ENCODE measurements at regions of chr4 and their contacts with region 1.

Region 1: DNA sequence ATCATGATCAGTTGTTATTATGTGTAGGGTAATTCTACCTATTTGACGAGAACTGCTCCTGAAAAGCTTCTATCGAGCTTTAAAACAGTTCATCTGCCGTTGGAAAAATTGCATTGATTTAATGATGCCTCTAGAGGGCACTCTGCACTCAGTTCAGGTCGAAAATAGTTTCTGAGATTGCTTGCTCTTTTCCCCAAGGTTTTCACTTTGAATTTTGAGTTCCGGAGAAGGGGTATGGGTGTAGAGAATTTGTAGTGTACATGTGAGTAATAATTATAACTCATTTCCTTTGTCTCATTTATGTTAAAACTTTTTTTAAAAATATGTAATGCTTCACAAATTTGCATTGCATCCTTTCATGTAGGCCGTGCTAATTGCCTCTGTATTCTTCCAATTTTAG is 28.4 kb upstream of the TNIP3 start:
- DNase-seq: no peak
- H3K4me3 ChIP-seq: no peak overlapping the region
- H3K27ac ChIP-seq: no peak overlapping the region
- H3K4me1 ChIP-seq: peaks cover 0 to 5% (median 0%) of the 10 kb centered on the region in 4 experiments; a peak in 2 of 7 replicates
- H3K27me3 ChIP-seq: no peaks in the 10 kb centered on the region
- CTCF ChIP-seq: peak in 2 of 3 experiments; percentile 70 to 82; a peak in 3 of 4 replicates
- EP300 ChIP-seq: no peak
- POLR2A ChIP-seq: no peak
- RAD21 ChIP-seq: peak; percentile 87 to 90

Region 2: GRCh38 chr4:121168446-121169281 is 23.8 kb before region 1 on chr4:
- CTCF ChIA-PET with region 1: interaction called, 13 read pairs
- POLR2A ChIA-PET with region 1: no interaction called
- DNase-seq: no peak
- H3K4me3 ChIP-seq: no peak overlapping the region
- H3K27ac ChIP-seq: no peak overlapping the region
- H3K4me1 ChIP-seq: no peaks in the 10 kb centered on the region
- H3K27me3 ChIP-seq: no peaks in the 10 kb centered on the region
- CTCF ChIP-seq: no peak
- EP300 ChIP-seq: no peak
- POLR2A ChIP-seq: no peak
- RAD21 ChIP-seq: no peak

Region 3: DNA sequence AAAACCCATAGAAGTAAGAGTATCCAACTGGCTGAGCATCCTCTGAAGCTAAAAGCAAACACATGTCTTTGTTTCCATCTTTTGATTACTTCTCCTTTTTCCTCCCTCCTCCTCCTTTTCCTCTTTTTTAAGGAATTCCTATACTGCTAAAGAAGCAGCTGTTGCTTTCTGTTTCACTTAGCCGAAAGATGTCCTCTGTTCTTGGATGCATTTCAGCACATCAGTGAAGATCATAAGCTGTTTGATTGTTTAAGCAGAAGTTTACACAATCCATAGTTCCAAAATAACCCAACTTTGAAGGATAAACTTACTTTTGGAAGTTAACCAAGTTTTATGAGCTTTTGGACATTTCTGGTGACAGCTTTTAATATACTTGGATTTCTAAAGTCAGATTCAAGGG is 26.7 kb after region 1 on chr4:
- CTCF ChIA-PET with region 1: interaction called, 12 read pairs
- POLR2A ChIA-PET with region 1: no interaction called
- DNase-seq: no peak
- H3K4me3 ChIP-seq: no peak overlapping the region
- H3K27ac ChIP-seq: no peak overlapping the region
- H3K4me1 ChIP-seq: no peaks in the 10 kb centered on the region
- H3K27me3 ChIP-seq: peaks cover 0 to 1% (median 0%) of the 10 kb centered on the region in 4 experiments; a peak in 1 of 7 replicates
- CTCF ChIP-seq: no peak
- EP300 ChIP-seq: no peak
- POLR2A ChIP-seq: no peak
- RAD21 ChIP-seq: no peak

Region 4: DNA sequence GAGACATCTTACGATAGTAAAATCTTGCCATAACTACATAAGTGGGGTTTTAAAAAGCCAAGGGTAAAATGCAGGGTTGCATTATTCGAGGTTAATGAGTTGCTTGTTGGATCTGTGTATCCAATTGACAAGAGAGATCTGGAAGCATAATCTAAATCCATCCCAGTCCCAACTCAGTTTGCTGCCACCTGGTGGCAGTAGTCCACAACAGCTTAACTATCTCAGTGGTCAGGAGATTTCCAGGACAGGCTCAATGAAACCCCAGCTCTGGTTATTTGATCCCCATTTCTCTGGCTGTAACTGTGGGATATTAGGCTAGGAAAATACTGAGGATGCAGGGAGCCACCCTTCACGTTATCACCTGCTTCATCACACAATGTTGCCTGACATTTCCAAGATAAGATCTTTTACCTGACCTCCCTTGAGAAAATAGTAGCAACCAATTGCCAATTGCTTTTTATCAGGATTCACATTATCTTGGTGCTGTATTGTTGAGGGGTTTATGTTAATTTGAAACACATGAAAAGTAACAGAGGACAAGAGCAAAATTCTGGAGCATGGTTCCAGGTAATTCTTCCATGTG is 59.8 kb after region 1 on chr4:
- CTCF ChIA-PET with region 1: interaction called, 65 read pairs
- POLR2A ChIA-PET with region 1: no interaction called
- DNase-seq: peak; percentile 25 to 63
- H3K4me3 ChIP-seq: no peak overlapping the region
- H3K27ac ChIP-seq: no peak overlapping the region
- H3K4me1 ChIP-seq: no peaks in the 10 kb centered on the region; a peak in 1 of 7 replicates
- H3K27me3 ChIP-seq: peaks cover 0 to 1% (median 0%) of the 10 kb centered on the region in 4 experiments; a peak in 1 of 7 replicates
- CTCF ChIP-seq: peak; percentile 52 to 88 (median 79)
- EP300 ChIP-seq: no peak
- POLR2A ChIP-seq: no peak
- RAD21 ChIP-seq: peak; percentile 64 to 79

Region 5: GRCh38 chr4:121554382-121554781 is 361.9 kb after region 1 on chr4:
- CTCF ChIA-PET with region 1: no interaction called
- POLR2A ChIA-PET with region 1: no interaction called
- DNase-seq: no peak
- H3K4me3 ChIP-seq: no peak overlapping the region
- H3K27ac ChIP-seq: no peak overlapping the region
- H3K4me1 ChIP-seq: no peaks in the 10 kb centered on the region
- H3K27me3 ChIP-seq: no peaks in the 10 kb centered on the region
- CTCF ChIP-seq: no peak
- EP300 ChIP-seq: no peak
- POLR2A ChIP-seq: no peak
- RAD21 ChIP-seq: no peak

Measured in H1 (cell line).